Pancreas (tissue), 10 donors: ENCODE measurements at regions of chr16 and their contacts with region 1.

Region 1: GRCh38 chr16:87636072-87636684 is 33.9 kb downstream of the JPH3 start:
- DNase-seq: peak; percentile 72 to 90 (median 78)
- ATAC-seq: peak; percentile 88 to 97 (median 96)
- H3K4me3 ChIP-seq: peak overlapping the region in 1 of 4 donors; percentile 27
- H3K27ac ChIP-seq: no peak overlapping the region
- H3K4me1 ChIP-seq: peaks cover 0 to 10% (median 8%) of the 10 kb centered on the region in 3 donors
- H3K27me3 ChIP-seq: no peaks in the 10 kb centered on the region
- CTCF ChIP-seq: peak; percentile 9 to 43 (median 38)

Region 2: GRCh38 chr16:87416826-87417527 is 219.2 kb before region 1 on chr16:
- intact Hi-C with region 1: loop called in 1 of 3 experiments (anchors 10 kb)
- DNase-seq: no peak
- ATAC-seq: peak in 1 of 4 donors; percentile 44
- H3K4me3 ChIP-seq: no peak overlapping the region
- H3K27ac ChIP-seq: no peak overlapping the region
- H3K4me1 ChIP-seq: no peaks in the 10 kb centered on the region
- H3K27me3 ChIP-seq: no peaks in the 10 kb centered on the region
- CTCF ChIP-seq: peak in 3 of 4 donors; percentile 31 to 36 (median 32)

Region 3: DNA sequence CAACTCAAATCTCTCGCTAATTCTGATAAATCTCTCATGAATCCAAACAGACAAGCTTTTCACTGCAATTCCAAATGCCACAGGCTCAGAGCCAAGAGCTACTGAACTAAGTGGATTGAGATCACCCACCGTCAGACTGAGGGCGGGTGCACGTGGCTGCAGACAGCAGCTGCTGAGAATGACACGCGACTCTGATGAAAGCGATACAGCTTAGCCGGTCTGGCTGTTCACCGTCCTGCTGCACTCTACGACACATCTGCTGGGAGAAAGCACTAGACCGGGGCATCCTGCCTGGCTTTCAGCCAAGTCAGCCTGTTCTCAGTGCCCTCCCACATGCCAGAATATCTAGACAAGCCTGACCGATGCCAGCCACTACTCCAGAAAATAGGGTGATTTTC is 87.0 kb after region 1 on chr16:
- intact Hi-C with region 1: no loop called
- DNase-seq: peak in 2 of 6 donors; percentile 28 to 36
- ATAC-seq: peak in 3 of 4 donors; percentile 48 to 89 (median 86)
- H3K4me3 ChIP-seq: no peak overlapping the region
- H3K27ac ChIP-seq: no peak overlapping the region
- H3K4me1 ChIP-seq: no peaks in the 10 kb centered on the region
- H3K27me3 ChIP-seq: no peaks in the 10 kb centered on the region
- CTCF ChIP-seq: no peak

Region 4: GRCh38 chr16:87812200-87812656 is 176.1 kb after region 1 on chr16:
- intact Hi-C with region 1: no loop called
- DNase-seq: peak in 1 of 6 donors; percentile 30
- ATAC-seq: peak in 3 of 4 donors; percentile 31 to 80 (median 75)
- H3K4me3 ChIP-seq: no peak overlapping the region
- H3K27ac ChIP-seq: no peak overlapping the region
- H3K4me1 ChIP-seq: peaks cover 0 to 2% (median 1%) of the 10 kb centered on the region in 3 donors
- H3K27me3 ChIP-seq: no peaks in the 10 kb centered on the region
- CTCF ChIP-seq: no peak